Psoas muscle (tissue), 8 donors: ENCODE measurements at regions of chr4 and their contacts with region 1.

Region 1: GRCh38 chr4:6986781-6987587 is 56.2 kb upstream of the TADA2B start:
- DNase-seq: peak; percentile 96 to 98
- ATAC-seq: peak; percentile 93 to 97 (median 96)
- H3K4me3 ChIP-seq: peak overlapping the region; percentile 67
- H3K27ac ChIP-seq: peak overlapping the region; percentile 87
- H3K4me1 ChIP-seq: peaks cover 75% of the 10 kb centered on the region
- H3K27me3 ChIP-seq: no peaks in the 10 kb centered on the region
- CTCF ChIP-seq: no peak

Region 2: GRCh38 chr4:6917461-6918271 is 69.3 kb before region 1 on chr4:
- intact Hi-C with region 1: loop called in 1 of 2 experiments (anchors 5 kb)
- DNase-seq: peak; percentile 60 to 83
- ATAC-seq: peak; percentile 52 to 69 (median 60)
- H3K4me3 ChIP-seq: no peak overlapping the region
- H3K27ac ChIP-seq: peak overlapping the region; percentile 67
- H3K4me1 ChIP-seq: peaks cover 46% of the 10 kb centered on the region
- H3K27me3 ChIP-seq: no peaks in the 10 kb centered on the region
- CTCF ChIP-seq: peak; percentile 42

Region 3: DNA sequence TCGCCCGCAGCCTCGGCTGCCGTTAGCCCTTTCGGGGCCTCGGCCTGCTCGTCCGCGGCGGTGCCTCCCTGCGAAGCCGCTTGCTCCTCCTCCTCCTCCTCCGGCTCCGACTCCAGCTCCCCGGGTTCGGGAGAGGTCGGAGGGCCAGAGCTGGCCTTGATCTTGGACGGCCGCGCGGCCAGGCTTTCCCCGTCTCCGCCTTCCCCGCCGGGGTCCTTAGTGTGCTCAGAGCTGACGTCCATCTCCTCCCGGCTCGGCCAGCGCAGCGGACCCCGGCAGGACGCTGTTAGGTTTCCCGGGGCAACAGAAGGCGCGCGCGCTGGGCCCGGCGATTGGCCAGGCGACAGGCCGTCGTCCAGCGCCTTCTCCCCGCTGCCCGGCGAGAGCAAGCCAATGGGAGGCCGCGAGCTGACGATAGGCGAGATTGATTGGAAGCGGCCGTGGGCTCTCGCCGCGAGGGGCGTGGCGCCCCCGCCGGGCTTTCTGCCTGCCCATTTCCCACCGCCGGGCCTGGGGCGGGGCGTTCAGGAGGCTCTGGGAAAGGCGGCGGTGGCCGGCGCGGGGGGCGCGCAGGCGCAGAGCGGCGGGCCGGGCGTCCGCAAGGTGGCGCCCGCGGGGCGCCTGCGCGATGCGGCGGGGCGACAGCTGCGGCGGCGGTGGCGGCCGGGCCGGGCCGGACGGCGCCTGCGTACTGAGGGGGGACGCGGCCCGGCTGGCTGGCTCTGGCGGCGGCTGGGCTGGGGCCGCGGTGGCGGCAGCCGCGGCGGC is 55.9 kb after region 1 on chr4 and contains the start of gene TADA2B:
- intact Hi-C with region 1: loop called in 1 of 2 experiments (anchors 5 kb)
- DNase-seq: peak; percentile 98 to 99
- ATAC-seq: peak; percentile 88 to 95 (median 90)
- H3K4me3 ChIP-seq: peak within 1 kb of the TSS; percentile 99
- H3K27ac ChIP-seq: peak within 1 kb of the TSS; percentile 94
- H3K4me1 ChIP-seq: peaks cover 49% of the 10 kb centered on the region
- H3K27me3 ChIP-seq: no peaks in the 10 kb centered on the region
- CTCF ChIP-seq: peak; percentile 54
- total RNA-seq, gene TADA2B: 43.0 to 70.3 (median 54.7) TPM

Region 4: DNA sequence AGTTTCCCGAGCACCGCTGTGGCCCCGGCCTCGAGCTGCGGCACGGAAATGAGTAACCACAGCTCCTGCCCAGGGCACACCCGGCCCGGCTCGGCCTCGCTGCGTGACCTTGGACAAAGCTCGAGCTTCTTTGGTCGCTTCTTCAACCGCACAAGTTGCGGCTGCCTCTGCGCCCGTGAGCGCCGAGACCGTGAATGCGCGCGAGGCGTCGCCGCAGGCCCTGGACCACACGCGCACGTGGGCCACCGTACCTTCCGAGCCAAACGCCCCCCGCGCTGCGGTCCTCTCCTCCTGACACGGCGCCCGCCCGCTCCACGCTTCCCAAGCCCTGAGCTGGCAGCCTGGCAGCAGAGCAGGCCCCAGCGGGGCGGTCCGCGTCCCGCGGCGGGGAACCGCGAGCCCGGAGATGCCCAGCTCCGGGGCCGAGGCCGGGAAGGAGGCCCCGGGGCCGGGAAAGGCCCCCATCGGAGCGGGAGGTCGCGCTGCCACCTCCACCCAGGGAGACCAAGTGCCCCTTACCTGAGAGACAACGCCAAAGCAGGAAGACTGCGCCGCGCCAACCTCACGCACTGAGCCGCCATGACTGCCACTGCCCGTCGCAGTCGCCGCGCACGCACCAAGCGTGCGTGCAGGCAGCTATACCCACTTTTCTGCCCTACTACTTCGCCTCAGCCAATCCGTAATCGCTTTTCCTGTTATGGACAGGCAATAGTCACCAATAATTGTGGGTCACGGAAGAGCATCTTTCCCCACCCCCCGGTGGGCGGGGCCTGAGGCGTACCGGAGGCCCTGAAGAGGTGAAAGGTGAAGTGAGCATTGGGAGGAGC is 80.7 kb after region 1 on chr4 and contains the start of gene GRPEL1:
- intact Hi-C with region 1: loop called (anchors 5 kb)
- DNase-seq: peak; percentile 100
- ATAC-seq: peak; percentile 94 to 97 (median 96)
- H3K4me3 ChIP-seq: peak within 1 kb of the TSS; percentile 84
- H3K27ac ChIP-seq: peak within 1 kb of the TSS; percentile 93
- H3K4me1 ChIP-seq: peaks cover 23% of the 10 kb centered on the region
- H3K27me3 ChIP-seq: no peaks in the 10 kb centered on the region
- CTCF ChIP-seq: no peak
- total RNA-seq, gene GRPEL1: 41.4 to 66.1 (median 57.8) TPM